ENCODE measurements at regions of chr10 and their contacts with region 1.

Region 1: GRCh38 chr10:329361-330099 is 194.3 kb downstream of the ZMYND11 start:
- DNase-seq: peak in 6 of 10 donors; percentile 15 to 63 (median 29)
- ATAC-seq: peak; percentile 55 to 76
- H3K4me3 Mint-ChIP-seq: peak overlapping the region; percentile 59 to 90 (median 81)
- H3K27ac Mint-ChIP-seq: peak overlapping the region; percentile 77 to 97 (median 90)
- H3K4me1 Mint-ChIP-seq: peaks cover 20 to 59% (median 37%) of the 10 kb centered on the region in 4 donors
- H3K27me3 Mint-ChIP-seq: no peaks in the 10 kb centered on the region

Region 2: DNA sequence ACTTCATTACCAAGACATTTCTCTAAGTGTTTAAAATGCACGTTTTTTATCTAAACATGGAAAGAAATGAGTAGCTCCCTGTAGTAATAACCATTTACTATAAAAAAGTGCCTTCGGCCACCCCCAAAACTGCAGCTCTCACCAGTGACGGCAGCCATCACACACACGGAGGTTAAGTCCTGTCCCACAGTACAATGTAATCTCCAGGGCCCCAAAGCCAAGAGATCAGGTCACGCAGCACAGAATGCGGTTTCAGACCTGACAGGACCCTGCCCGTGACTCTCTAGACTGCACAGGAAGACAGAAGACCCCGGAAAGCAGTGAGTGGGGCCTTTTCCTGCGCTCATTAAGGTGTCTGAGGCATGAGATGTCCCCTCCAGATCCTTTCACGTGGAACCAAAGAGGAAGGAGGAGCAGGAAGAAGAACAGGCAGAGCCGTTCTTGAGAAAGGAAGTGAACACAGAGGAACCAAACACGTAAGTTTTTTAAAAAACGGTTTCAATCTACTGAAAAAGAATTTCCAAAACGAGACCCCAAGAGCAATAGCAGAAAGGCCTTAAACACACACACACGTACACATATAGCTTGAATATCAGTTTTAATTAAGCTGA is 68.6 kb before region 1 on chr10:
- POLR2A ChIA-PET with region 1: no interaction called
- DNase-seq: no peak
- ATAC-seq: no peak
- H3K4me3 Mint-ChIP-seq: peak overlapping the region in 5 of 10 donors; percentile 27 to 54 (median 34)
- H3K27ac Mint-ChIP-seq: peak overlapping the region in 5 of 10 donors; percentile 20 to 72 (median 42)
- H3K4me1 Mint-ChIP-seq: peaks cover 0 to 9% (median 3%) of the 10 kb centered on the region in 4 donors
- H3K27me3 Mint-ChIP-seq: no peaks in the 10 kb centered on the region

Region 3: DNA sequence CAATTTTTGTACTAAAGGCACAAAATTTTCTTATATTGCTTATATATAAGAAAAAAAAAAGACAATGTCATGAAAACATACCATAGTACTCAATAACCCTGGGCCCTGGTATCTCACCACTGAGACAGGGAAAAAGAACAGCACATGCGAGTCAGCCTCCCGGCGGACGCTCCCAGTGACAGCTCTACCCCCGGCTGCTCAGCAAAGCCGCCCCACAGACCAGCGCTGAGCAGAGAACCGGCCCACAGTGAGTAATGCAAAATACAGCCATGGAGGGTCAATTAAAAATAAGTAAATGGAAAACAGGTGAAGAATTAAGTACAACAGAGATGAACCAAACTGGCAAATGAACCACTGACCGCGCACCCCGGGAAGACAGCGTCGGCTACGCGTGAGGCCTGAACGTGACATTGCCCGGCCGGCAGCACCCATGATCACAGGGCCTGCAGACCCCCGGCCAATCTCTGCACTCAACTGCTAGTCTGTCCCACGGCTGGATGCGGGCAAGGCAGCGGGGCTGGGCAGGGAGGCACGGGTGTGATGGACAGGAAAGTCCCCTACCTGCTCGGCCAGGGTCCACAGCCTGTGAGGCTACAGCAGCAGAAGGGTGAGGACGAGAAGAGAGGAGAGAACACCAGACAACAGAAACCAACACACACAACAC is 18.4 kb before region 1 on chr10:
- POLR2A ChIA-PET with region 1: no interaction called
- DNase-seq: no peak
- ATAC-seq: no peak
- H3K4me3 Mint-ChIP-seq: peak overlapping the region in 1 of 10 donors; percentile 59
- H3K27ac Mint-ChIP-seq: peak overlapping the region in 1 of 10 donors; percentile 79
- H3K4me1 Mint-ChIP-seq: peaks cover 15 to 78% (median 21%) of the 10 kb centered on the region in 4 donors
- H3K27me3 Mint-ChIP-seq: no peaks in the 10 kb centered on the region

Region 4: GRCh38 chr10:351770-352334 is 22.3 kb after region 1 on chr10:
- POLR2A ChIA-PET with region 1: interaction called, 12 read pairs
- DNase-seq: peak in 9 of 10 donors; percentile 25 to 81 (median 58)
- ATAC-seq: peak; percentile 95 to 96
- H3K4me3 Mint-ChIP-seq: peak overlapping the region; percentile 67 to 90 (median 79)
- H3K27ac Mint-ChIP-seq: peak overlapping the region; percentile 66 to 99 (median 92)
- H3K4me1 Mint-ChIP-seq: peaks cover 20 to 42% (median 24%) of the 10 kb centered on the region in 4 donors
- H3K27me3 Mint-ChIP-seq: no peaks in the 10 kb centered on the region

Region 5: DNA sequence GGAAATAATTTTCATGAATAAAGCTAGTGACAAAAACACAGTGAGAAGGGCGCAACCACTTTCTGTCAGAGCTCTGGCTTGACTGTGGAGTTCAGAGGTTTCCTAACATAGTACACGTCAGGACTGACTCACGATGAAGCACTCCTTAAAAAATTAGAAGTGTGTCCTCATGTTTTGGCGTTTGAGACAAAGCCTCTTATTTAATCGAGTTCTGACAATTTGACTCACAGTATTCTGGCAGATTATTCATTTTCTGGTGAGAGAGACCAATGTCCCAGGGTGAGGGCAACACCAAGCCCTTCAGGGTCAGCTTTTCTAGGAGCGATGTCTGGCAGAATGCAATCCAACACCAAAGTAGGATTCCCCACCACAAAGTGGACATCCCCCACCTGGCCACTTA is 251.2 kb after region 1 on chr10:
- POLR2A ChIA-PET with region 1: no interaction called
- DNase-seq: no peak
- ATAC-seq: no peak
- H3K4me3 Mint-ChIP-seq: no peak overlapping the region
- H3K27ac Mint-ChIP-seq: no peak overlapping the region
- H3K4me1 Mint-ChIP-seq: no peaks in the 10 kb centered on the region
- H3K27me3 Mint-ChIP-seq: peaks cover 2 to 10% (median 3%) of the 10 kb centered on the region in 5 donors